Activated T-helper 1 cell treated with anti-CD3 and anti-CD28 coated beads, Interleukin-12 subunit alpha, Interleukin-12 subunit beta, Interleukin-2, Interleukin-4 antibody, amounts not matched to agents 30 ng/mL and 10 ng/mL and 1 ng/mL, durations not matched to agents 14 hours and 24 hours and 36 hours (primary cell): ENCODE measurements at regions of chr3 and their contacts with region 1.

Region 1: GRCh38 chr3:184811999-184812661 is at the start of gene VPS8:
- DNase-seq: peak; percentile 96
- H3K4me3 Mint-ChIP-seq: peak within 1 kb of the TSS; percentile 94
- H3K27ac Mint-ChIP-seq: peak within 1 kb of the TSS; percentile 95
- H3K4me1 Mint-ChIP-seq: peaks cover 74% of the 10 kb centered on the region
- H3K27me3 Mint-ChIP-seq: peaks cover 4% of the 10 kb centered on the region
- total RNA-seq, gene VPS8: 37.8 and 40.3 TPM in 2 replicates

Region 2: GRCh38 chr3:183895296-183895695 is 916.8 kb before region 1 on chr3:
- intact Hi-C with region 1: no loop called
- DNase-seq: no peak
- H3K4me3 Mint-ChIP-seq: no peak overlapping the region
- H3K27ac Mint-ChIP-seq: no peak overlapping the region
- H3K4me1 Mint-ChIP-seq: peaks cover 6% of the 10 kb centered on the region
- H3K27me3 Mint-ChIP-seq: peaks cover 8% of the 10 kb centered on the region

Region 3: DNA sequence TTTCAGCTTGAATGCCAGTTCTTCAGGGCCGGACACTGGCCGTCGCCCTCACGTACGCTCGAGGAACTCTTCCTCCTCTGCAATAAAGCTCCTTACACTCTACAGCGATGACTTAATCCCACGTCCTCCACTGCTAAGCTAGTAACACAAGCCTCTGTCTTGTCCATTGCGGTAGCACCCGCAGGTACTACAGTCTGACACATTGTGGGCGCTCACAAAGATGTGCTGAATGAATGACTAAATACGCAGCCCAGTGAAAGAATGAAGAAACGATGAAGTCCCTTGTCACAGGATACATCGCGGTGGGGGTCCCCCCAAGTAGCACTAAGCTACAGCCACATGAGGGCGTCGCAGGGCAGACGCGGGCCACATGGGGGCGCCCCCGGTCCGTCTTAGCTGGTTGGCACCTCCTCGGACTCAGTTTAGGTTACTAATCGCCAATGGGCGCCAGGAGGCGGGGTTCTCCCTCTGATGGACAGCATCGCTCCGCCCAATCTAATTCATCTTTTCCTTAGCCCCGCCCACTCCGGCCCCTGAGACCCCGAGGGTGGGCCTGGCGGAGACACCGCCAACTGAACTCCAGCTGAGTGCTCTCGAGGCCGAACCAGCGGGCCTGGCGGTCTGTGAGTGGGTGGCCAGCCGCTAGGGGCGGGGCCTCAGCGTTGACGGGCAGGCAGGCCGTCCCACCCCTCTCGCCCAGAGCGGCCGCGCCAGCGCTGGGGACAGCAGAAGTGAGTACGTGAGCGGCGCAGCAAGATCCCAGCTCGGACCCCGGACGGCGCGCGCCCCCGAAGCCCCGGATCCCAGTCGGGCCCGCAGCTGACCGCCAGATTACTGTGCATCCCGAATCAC is 250.8 kb before region 1 on chr3 and contains the start of gene EPHB3:
- intact Hi-C with region 1: loop called (anchors 1 kb)
- DNase-seq: peak; percentile 79
- H3K4me3 Mint-ChIP-seq: peak within 1 kb of the TSS; percentile 73
- H3K27ac Mint-ChIP-seq: no peak within 1 kb of the TSS
- H3K4me1 Mint-ChIP-seq: peaks cover 18% of the 10 kb centered on the region
- H3K27me3 Mint-ChIP-seq: peaks cover 54% of the 10 kb centered on the region
- total RNA-seq, gene EPHB3: 0.31 TPM in 1 of 2 replicates, not detected in the other

Region 4: DNA sequence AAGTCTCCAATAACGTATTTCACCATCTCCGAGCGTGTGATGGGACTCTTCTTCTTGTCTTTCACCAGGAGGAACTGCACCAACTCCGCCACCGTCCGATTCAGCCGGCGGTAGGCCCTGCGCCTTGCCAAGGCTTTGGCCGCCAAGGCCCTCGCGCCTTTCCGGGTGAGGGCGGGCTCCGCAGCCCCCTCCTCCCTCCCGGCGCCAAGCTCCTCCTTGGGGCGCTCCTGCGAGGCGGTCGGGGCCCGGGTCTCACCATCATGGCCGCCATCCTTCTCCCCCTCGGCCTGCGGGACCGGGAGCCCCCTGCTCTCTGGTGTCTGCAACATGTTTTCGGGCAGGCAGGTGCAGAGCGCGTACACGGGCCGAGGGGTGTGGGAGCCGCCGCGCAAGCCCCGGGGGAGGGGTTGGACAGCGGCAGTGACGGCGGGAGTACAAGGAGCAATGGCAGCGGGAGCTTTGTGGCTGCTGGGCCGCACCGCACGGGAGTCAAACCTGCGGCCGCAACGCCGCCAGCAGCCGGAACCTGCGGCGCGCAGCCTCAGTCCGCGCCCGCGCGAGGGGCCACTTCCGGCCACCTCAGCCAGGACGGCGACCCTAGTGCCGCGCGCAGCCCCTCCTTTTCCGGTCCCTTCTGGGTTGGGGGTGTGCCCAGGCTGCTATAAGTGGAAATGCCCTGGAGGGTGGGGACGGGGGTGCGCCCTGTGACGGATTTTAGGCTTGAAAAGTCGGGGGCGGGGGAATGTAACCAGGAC is 100.5 kb before region 1 on chr3 and contains the start of gene MAGEF1:
- intact Hi-C with region 1: loop called (anchors 2 kb)
- DNase-seq: peak; percentile 74
- H3K4me3 Mint-ChIP-seq: peak within 1 kb of the TSS; percentile 94
- H3K27ac Mint-ChIP-seq: peak within 1 kb of the TSS; percentile 77
- H3K4me1 Mint-ChIP-seq: peaks cover 37% of the 10 kb centered on the region
- H3K27me3 Mint-ChIP-seq: peaks cover 20% of the 10 kb centered on the region
- total RNA-seq, gene MAGEF1: 16.0 and 17.3 TPM in 2 replicates

Region 5: DNA sequence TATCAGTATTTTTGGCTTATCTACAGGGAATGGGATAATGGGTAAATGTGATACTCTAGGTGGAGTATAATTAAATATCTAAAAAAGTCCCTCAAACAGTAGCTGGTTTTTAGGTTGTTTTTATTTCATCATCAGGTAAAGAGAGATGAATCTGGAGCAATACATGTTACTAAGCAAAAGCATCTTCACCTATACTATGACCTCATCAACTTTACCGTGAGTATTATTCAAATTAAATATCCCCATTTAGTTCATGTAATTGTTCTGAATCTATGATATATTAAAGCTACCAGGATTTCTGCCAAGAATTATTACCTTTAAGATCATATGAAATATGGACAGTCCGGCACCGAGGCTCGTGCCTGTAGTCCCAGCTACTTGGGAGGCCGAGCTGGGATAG is 47.7 kb after region 1 on chr3:
- intact Hi-C with region 1: no loop called
- DNase-seq: no peak
- H3K4me3 Mint-ChIP-seq: no peak overlapping the region
- H3K27ac Mint-ChIP-seq: no peak overlapping the region
- H3K4me1 Mint-ChIP-seq: no peaks in the 10 kb centered on the region
- H3K27me3 Mint-ChIP-seq: no peaks in the 10 kb centered on the region

Region 6: DNA sequence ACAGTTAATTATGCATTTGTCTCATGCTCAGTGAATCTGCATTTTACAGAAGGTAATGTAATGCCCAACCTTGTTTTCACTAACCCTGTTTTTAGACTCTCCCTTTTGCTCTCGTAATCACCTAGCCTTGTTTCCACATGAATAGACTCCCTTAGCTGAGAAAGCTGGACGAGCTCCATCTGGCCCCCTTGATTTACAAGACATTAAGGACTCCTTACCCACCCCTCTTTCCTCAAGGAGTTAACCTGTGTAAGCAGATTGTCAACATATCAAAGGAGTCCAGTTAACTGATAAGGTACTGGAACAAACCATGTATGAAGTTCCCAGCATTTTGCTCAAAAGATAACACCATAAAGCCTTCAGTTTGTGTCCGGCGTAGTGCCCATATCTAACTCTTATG is 99.4 kb after region 1 on chr3:
- intact Hi-C with region 1: no loop called
- DNase-seq: no peak
- H3K4me3 Mint-ChIP-seq: no peak overlapping the region
- H3K27ac Mint-ChIP-seq: no peak overlapping the region
- H3K4me1 Mint-ChIP-seq: no peaks in the 10 kb centered on the region
- H3K27me3 Mint-ChIP-seq: no peaks in the 10 kb centered on the region

Region 7: GRCh38 chr3:185282696-185283394 is 470.7 kb after region 1 on chr3:
- intact Hi-C with region 1: loop called (anchors 2 kb)
- DNase-seq: peak; percentile 91
- H3K4me3 Mint-ChIP-seq: peak overlapping the region; percentile 96
- H3K27ac Mint-ChIP-seq: peak overlapping the region; percentile 80
- H3K4me1 Mint-ChIP-seq: peaks cover 19% of the 10 kb centered on the region
- H3K27me3 Mint-ChIP-seq: peaks cover 3% of the 10 kb centered on the region

Region 8: DNA sequence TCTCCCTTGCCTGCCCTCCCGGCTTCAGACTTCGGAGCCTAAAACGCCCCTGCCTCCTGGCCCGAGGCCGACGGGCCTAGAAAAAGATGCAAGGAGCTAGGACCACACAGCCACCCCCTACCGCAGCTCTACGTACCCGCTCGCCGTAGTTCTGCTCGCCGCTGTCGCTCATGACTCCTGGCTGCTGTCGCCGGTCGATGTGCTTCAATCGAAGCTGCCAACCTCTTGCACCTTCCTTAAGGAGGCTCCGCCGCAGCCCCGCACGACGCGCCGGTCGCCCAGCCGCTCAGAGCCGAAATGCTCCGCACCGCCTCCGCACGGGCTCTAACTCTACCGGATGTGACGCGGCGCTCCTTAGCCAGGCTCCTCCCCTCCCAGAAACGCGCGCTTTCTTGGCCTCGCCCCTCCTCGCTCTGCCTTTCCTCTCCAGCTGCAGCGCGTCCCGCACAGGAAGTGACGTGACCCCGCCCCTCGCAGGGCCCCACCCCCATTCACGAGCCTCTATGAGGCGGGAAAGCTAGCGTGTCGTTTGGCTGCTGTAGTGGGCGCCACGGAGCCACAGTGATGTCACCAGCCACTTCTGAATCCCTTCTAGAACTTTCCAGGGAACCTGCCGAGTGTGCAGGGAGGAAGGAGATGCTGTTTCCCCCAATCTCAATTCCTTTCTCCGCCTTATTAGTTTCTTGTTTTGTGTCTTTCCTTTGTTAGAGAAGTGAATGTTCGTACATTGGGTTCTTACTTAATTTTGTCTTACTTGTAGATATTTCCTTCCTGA is 1125.7 kb after region 1 on chr3 and contains the start of gene TRA2B:
- intact Hi-C with region 1: loop called (anchors 10 kb)
- DNase-seq: peak; percentile 98
- H3K4me3 Mint-ChIP-seq: peak within 1 kb of the TSS; percentile 97
- H3K27ac Mint-ChIP-seq: peak within 1 kb of the TSS; percentile 99
- H3K4me1 Mint-ChIP-seq: peaks cover 40% of the 10 kb centered on the region
- H3K27me3 Mint-ChIP-seq: peaks cover 8% of the 10 kb centered on the region
- total RNA-seq, gene TRA2B: 279 and 312 TPM in 2 replicates